ENCODE measurements at regions of chr1 and their contacts with region 1.

Region 1: DNA sequence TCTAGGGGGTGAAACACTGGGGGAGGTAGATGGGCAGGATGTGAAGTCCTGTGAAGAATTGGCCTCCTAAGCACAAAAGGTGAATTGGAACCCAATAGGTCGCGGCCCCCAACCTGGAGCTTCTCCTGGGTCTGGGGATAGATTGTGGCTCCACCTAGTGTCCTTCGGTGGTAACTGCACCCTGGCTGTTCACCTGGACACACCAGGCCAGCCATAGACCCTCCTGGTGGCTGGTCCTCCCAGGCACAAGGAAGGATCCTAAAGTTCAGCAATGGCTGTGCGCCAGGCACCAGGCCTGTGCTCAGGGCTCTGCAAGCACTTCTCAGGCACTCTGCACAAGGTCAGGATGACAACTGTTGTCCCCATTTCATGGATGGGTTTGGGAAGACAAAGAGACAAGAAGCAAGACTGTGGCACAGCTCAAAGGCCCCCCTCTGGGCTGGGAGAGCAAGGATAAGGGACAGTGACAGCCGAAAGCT is 13.5 kb downstream of the ESPN start:
- DNase-seq: peak; percentile 80
- ATAC-seq: peak; percentile 67
- H3K4me3 Mint-ChIP-seq: no peak overlapping the region
- H3K27ac Mint-ChIP-seq: no peak overlapping the region
- H3K4me1 Mint-ChIP-seq: peaks cover 2% of the 10 kb centered on the region
- H3K27me3 Mint-ChIP-seq: peaks cover 24% of the 10 kb centered on the region

Region 2: DNA sequence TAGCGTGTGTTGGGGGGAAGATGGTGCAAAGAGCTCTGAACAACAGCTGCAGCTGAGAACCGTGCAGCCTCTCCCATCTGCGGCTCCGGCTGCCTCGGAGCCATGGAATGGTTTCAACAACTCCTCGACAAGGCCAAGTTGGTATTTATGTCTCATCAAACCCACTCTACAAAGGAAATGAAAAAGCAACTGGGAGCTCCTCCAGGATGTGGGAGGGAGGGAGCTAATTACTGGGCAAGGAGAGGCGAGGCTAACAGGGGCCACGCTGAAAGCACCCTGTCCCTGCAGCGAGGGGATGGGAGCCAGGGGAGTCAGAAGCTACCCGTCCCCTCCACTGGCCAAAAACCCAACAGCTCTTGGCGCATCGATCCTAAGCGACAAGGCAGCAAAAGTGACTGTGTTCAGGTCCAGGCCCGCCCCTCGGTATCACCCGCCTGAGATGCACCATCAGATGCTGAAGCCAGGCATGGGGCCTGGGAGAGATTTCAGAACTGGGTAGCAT is 107.6 kb before region 1 on chr1:
- CTCF ChIA-PET with region 1: no interaction called
- POLR2A ChIA-PET with region 1: no interaction called
- DNase-seq: no peak
- ATAC-seq: no peak
- H3K4me3 Mint-ChIP-seq: no peak overlapping the region
- H3K27ac Mint-ChIP-seq: no peak overlapping the region
- H3K4me1 Mint-ChIP-seq: peaks cover 3% of the 10 kb centered on the region
- H3K27me3 Mint-ChIP-seq: no peaks in the 10 kb centered on the region

Region 3: DNA sequence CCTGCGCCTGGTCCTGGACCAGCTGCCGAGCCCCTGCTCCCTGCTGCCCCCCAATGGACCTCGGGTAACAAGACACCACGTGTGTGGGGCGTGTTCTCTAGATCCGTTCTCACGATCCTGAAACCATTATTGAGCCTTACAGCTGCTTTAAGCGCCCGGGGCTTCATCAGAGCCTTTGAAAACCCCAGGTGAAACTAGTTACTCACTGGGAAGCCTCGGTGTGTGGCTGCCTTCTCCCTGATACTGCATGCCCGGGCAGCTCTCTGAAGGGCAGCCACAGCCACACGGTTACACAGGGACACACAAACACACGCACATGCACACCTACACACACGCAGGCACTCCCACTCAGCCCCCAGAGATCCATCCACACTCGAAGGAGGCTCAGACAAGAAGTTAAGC is 23.6 kb before region 1 on chr1:
- CTCF ChIA-PET with region 1: interaction called, 103 read pairs
- POLR2A ChIA-PET with region 1: no interaction called
- DNase-seq: peak; percentile 66
- ATAC-seq: peak; percentile 85
- H3K4me3 Mint-ChIP-seq: no peak overlapping the region
- H3K27ac Mint-ChIP-seq: no peak overlapping the region
- H3K4me1 Mint-ChIP-seq: peaks cover 15% of the 10 kb centered on the region
- H3K27me3 Mint-ChIP-seq: peaks cover 59% of the 10 kb centered on the region

Region 4: DNA sequence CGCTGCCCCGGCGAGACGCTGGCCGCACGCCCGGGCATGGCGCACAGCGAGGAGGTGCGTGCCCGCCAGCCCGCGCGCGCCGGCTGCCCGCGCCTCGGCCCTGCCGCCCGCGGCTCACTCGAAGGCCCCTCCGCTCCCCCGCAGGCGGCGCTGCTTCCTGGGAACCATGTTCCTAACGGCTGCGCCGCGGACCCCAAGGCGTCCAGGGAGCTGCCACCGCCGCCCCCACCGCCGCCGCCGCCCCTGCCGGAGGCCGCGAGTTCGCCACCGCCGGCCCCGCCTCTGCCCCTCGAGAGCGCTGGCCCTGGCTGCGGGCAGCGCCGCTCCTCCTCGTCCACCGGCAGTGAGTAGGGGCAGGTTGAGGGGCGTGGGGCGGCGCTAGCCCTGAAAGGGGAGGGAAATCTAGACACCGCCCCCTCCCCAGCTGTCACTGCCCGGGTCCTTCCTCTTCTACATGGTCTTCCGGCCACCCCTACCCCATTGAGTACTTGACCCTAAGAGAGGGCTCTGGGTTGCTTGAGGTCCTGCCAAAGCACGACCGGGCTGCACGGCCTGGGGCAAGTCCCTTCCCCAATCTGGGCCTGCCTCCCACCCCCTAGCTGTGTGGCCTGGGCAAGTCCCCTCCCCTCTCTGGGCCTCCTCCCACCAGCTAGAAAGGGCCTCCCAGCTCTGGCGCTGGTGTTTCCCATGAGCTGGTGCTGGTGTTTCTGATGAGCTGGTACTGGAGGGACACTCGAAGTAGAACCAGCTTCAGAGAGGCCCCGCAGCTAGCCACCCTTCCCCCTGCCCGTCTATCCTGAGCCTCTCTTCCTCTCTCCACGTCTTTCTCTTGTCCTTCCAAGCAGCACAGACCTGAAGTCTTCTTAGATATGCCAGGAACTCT is 10.9 kb after region 1 on chr1:
- CTCF ChIA-PET with region 1: interaction called, 15 read pairs
- POLR2A ChIA-PET with region 1: no interaction called
- DNase-seq: no peak
- ATAC-seq: peak; percentile 26
- H3K4me3 Mint-ChIP-seq: no peak overlapping the region
- H3K27ac Mint-ChIP-seq: no peak overlapping the region
- H3K4me1 Mint-ChIP-seq: peaks cover 18% of the 10 kb centered on the region
- H3K27me3 Mint-ChIP-seq: peaks cover 57% of the 10 kb centered on the region

Region 5: DNA sequence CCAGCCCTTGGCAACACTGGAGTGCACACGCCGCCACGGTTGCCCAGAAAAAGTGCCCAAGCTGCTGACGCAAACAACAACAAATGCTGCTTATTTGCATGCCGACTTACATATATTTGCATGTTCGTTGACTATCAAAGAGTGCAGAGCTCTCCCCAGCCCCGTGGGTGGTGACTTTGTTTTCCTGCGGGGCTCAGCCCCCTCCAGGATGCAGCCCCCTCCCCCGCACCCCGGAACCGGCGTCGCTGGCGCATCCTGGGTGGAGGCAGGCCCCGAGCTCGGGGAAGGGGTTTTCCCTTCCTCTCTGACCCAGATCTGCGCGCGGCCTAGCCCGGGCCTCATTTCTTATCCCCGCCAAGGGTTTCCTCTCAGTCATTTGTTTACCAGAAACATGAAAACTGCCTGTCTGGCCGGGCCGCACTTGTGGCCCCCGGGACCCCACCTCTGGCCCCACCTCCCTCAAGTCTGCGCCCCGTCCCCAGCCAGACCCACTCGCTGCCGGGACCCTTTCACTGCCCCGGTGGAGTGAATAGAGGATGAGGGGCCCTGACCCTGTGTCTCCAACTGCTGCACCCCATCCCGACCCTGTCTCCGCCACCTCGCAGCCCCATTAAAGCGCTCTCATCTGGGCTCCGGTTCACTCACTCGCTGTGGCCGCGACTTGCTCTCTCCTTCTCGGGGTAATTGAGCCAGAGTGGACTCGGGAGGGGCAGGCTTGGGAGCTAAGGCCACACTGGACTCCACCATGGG is 22.4 kb after region 1 on chr1:
- CTCF ChIA-PET with region 1: interaction called, 16 read pairs
- POLR2A ChIA-PET with region 1: interaction called, 4 read pairs
- DNase-seq: peak; percentile 81
- ATAC-seq: peak; percentile 75
- H3K4me3 Mint-ChIP-seq: peak overlapping the region; percentile 73
- H3K27ac Mint-ChIP-seq: peak overlapping the region; percentile 86
- H3K4me1 Mint-ChIP-seq: peaks cover 54% of the 10 kb centered on the region
- H3K27me3 Mint-ChIP-seq: peaks cover 19% of the 10 kb centered on the region

Region 6: GRCh38 chr1:6579374-6580118 is 141.5 kb after region 1 on chr1 and contains the start of gene ZBTB48:
- CTCF ChIA-PET with region 1: no interaction called
- POLR2A ChIA-PET with region 1: no interaction called
- DNase-seq: peak; percentile 98
- ATAC-seq: peak; percentile 98
- H3K4me3 Mint-ChIP-seq: peak within 1 kb of the TSS; percentile 97
- H3K27ac Mint-ChIP-seq: peak within 1 kb of the TSS; percentile 99
- H3K4me1 Mint-ChIP-seq: peaks cover 35% of the 10 kb centered on the region
- H3K27me3 Mint-ChIP-seq: no peaks in the 10 kb centered on the region
- total RNA-seq, gene ZBTB48: 36.5 to 41.7 TPM

Measured in activated CD8-positive, alpha-beta T cell treated with anti-CD3 and anti-CD28 coated beads, Interleukin-2, amount 10 ng/mL, durations not matched to agents 7 days and 5 days (primary cell).